B cell (primary cell): ENCODE measurements at regions of chr3 and their contacts with region 1.

Region 1: DNA sequence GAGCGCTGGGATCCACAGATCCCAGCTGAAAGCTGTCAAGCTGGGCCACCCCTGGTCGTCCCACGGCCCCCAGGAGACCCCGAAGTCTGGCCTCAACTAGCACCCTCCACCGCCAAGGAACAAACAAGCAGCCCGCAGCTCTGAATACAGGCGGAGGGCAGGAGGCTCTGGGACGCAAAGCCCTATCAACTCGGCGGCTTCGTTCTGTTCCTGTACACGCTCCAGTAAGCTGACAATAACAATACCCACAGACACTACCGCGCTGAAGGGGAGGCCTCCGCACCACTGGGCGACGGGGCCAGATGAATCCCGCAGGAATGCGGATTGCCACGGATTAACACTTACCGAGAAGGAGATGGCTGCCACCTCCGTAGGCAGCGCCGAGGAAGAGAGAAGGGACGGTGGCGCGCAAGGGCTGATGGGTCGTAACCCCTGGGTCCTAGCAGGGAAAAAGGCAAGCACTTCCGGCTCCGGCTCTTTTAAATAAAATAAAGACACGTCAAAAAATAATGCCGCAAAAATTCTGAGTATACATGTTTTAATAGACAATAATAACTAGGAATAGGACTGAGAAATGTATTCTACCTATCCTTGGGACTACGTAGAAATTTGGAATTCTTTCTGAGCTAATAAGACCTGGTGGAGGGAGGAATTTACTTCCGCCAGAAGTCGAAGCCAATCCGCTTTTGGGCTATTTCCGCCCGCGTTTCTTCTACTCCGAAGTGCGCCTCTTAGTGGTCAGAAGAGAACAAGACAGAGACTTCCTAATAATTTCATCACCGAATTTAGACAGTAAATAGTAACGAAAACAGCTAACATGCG is at the start of gene RPL32:
- DNase-seq: peak; percentile 96
- ATAC-seq: peak; percentile 92
- H3K4me3 ChIP-seq: peak within 1 kb of the TSS; percentile 83 to 99 (median 90)
- H3K4me3 Mint-ChIP-seq: peak within 1 kb of the TSS; percentile 99
- H3K27ac ChIP-seq: peak within 1 kb of the TSS; percentile 96 to 97
- H3K27ac Mint-ChIP-seq: peak within 1 kb of the TSS; percentile 99
- H3K4me1 ChIP-seq: peaks cover 14 to 30% of the 10 kb centered on the region in 2 donors
- H3K4me1 Mint-ChIP-seq: peaks cover 45% of the 10 kb centered on the region
- H3K27me3 ChIP-seq: no peaks in the 10 kb centered on the region
- H3K27me3 Mint-ChIP-seq: no peaks in the 10 kb centered on the region
- CTCF ChIP-seq: peak; percentile 86
- total RNA-seq, gene RPL32: 2,575 and 2,756 TPM in 2 replicates

Region 2: GRCh38 chr3:12556671-12557472 is 284.5 kb before region 1 on chr3 and contains the start of gene MKRN2:
- CTCF ChIA-PET with region 1: interaction called, 3 read pairs
- POLR2A ChIA-PET with region 1: no interaction called
- intact Hi-C with region 1: loop called (anchors 1 kb)
- DNase-seq: peak; percentile 91
- ATAC-seq: peak; percentile 96
- H3K4me3 ChIP-seq: peak within 1 kb of the TSS; percentile 85 to 91 (median 90)
- H3K4me3 Mint-ChIP-seq: peak within 1 kb of the TSS; percentile 91
- H3K27ac ChIP-seq: peak within 1 kb of the TSS; percentile 91 to 92
- H3K27ac Mint-ChIP-seq: peak within 1 kb of the TSS; percentile 84
- H3K4me1 ChIP-seq: peaks cover 40 to 41% of the 10 kb centered on the region in 2 donors
- H3K4me1 Mint-ChIP-seq: peaks cover 60% of the 10 kb centered on the region
- H3K27me3 ChIP-seq: peaks cover 0 to 17% (median 5%) of the 10 kb centered on the region in 4 experiments
- H3K27me3 Mint-ChIP-seq: peaks cover 23% of the 10 kb centered on the region
- CTCF ChIP-seq: no peak
- total RNA-seq, gene MKRN2: 25.9 and 29.3 TPM in 2 replicates

Region 3: DNA sequence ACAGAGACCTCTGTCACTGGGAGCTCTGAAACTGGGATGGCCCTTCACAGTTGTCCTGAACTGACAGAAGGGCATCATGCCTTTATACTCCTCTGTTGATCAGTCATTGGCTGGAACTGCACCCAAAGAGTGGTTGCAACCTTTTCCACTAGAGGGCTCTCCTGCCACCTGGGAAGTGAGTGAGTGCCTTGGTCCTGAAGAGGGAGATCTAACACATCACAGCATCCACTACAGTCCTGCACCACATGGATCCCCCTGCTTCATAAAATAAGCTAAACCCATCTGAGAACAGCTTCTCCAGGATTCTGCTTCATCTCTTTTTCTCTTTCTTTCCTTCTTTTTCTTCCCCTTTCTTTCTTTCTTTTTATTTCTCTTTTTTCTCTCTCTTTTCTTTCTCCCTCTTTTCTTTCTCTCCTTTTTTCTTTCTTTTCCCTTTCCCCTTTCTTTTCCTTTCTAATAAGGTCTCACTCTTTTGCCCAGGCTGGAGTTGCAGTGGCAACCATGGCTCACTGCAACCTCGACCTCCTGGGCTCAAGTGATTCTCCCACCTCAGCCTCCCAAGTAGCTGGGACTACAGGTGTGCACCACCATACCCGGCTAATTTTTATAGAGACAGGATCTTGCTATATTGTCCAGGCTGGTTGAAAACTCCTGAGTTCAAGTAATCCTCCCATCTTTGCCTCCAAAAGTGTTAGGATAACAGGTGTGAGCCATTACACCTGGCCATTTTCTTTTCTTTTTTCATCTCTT is 134.7 kb before region 1 on chr3:
- CTCF ChIA-PET with region 1: interaction called, 13 read pairs
- POLR2A ChIA-PET with region 1: no interaction called
- intact Hi-C with region 1: loop called (anchors 1 kb)
- DNase-seq: peak; percentile 67
- ATAC-seq: peak; percentile 97
- H3K4me3 ChIP-seq: no peak overlapping the region
- H3K4me3 Mint-ChIP-seq: no peak overlapping the region
- H3K27ac ChIP-seq: no peak overlapping the region
- H3K27ac Mint-ChIP-seq: no peak overlapping the region
- H3K4me1 ChIP-seq: no peaks in the 10 kb centered on the region
- H3K4me1 Mint-ChIP-seq: peaks cover 1% of the 10 kb centered on the region
- H3K27me3 ChIP-seq: peaks cover 0 to 7% (median 0%) of the 10 kb centered on the region in 4 experiments
- H3K27me3 Mint-ChIP-seq: peaks cover 8% of the 10 kb centered on the region
- CTCF ChIP-seq: peak; percentile 77

Region 4: DNA sequence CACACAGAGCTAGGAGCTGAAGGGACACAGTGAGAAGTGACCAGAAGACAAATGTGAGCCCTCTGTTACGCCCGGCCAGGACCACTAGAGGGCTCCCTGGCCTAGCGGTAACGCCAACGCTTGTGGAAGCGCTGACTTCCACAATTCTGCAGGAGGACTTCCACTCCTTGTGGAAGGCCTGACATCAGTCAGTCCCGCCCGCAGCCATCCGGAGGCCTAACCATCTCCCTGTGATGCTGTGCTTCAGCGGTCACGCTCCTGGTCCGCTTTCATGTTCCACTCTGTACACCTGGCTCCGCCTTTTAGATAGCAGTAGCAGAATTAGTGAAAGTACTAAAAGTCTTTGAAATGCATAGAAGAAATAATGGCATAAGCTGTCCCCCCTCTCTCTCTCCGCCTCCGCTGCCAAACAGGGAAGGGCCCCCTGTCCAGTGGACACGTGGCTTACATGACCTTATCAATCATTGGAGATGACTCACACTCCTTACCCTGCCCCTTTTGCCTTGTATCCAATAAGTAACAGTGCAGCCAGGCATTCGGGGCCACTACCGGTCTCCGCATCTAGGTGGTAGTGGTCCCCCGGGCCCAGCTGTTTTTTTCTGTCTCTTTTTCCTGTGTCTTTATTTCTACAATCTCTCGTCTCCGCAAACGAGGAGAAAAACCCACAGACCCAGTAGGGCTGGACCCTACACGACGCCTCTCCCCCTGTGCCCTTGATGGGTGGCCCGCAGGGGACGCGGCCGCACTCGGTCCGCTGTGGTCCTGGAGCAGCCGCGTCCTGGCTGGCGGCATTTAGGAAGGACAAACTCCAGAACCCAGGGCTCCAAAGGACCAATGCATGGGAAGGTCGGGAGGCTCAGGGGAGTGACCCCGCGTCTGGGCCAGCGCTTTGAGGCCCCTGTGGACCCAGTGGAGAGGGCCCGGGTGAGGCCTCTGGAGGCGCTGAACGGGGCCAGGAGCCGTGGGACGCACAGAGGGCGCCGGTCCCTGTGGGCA is 27.0 kb after region 1 on chr3:
- CTCF ChIA-PET with region 1: interaction called, 4 read pairs
- POLR2A ChIA-PET with region 1: no interaction called
- intact Hi-C with region 1: loop called (anchors 1 kb)
- DNase-seq: peak; percentile 79
- ATAC-seq: peak; percentile 73
- H3K4me3 ChIP-seq: peak overlapping the region; percentile 19 to 59 (median 47)
- H3K4me3 Mint-ChIP-seq: peak overlapping the region; percentile 85
- H3K27ac ChIP-seq: no peak overlapping the region
- H3K27ac Mint-ChIP-seq: peak overlapping the region; percentile 8
- H3K4me1 ChIP-seq: peaks cover 16 to 34% of the 10 kb centered on the region in 2 donors
- H3K4me1 Mint-ChIP-seq: peaks cover 23% of the 10 kb centered on the region
- H3K27me3 ChIP-seq: peaks cover 0 to 23% (median 3%) of the 10 kb centered on the region in 4 experiments
- H3K27me3 Mint-ChIP-seq: peaks cover 9% of the 10 kb centered on the region
- CTCF ChIP-seq: peak; percentile 92

Region 5: DNA sequence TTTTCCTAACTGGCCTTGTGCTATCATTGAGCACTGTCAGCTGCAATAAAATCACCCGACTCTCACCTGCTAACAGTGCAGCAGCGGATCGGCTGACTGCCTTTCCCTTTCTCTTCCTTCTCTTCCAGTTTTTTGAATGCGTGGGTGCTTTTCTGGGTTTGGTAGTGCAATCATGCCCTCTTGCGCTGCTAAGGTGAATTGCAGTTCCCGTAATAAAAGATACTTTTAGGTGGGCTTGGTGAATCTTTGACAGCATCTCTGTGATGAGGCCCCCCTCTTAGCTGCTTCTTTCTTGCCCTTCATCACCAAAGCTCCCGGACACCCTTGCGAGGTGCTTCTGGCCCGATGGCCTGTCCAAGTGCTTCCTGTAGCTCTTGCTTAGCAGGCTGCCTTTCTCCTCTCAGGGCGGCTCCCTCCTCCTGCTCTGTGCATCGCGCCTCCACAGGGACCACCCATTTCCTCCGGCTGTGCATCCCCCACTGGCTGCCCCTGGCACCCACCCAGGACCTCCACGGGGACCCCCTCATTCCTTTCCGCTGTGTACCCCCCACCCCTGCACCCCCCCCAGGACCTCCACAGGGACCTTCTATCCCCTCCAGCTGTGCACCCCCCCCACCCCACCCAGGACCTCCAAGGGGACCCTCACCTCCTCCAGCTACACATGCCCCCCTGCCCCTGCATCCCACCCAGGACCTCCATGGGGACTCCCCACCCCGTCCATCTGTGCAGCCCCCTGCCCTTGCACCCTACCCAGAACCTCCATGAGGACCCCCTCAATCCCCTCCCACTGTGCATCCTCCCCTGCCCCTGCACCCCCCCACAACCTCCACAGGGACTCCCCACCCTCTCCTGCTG is 50.9 kb after region 1 on chr3:
- CTCF ChIA-PET with region 1: interaction called, 18 read pairs
- POLR2A ChIA-PET with region 1: interaction called, 3 read pairs
- intact Hi-C with region 1: loop called (anchors 2 kb)
- DNase-seq: peak; percentile 75
- ATAC-seq: peak; percentile 37
- H3K4me3 ChIP-seq: peak overlapping the region in 1 of 5 experiments; percentile 35
- H3K4me3 Mint-ChIP-seq: peak overlapping the region; percentile 2
- H3K27ac ChIP-seq: no peak overlapping the region
- H3K27ac Mint-ChIP-seq: no peak overlapping the region
- H3K4me1 ChIP-seq: peaks cover 4 to 8% of the 10 kb centered on the region in 2 donors
- H3K4me1 Mint-ChIP-seq: peaks cover 14% of the 10 kb centered on the region
- H3K27me3 ChIP-seq: peaks cover 0 to 14% (median 3%) of the 10 kb centered on the region in 4 experiments
- H3K27me3 Mint-ChIP-seq: peaks cover 9% of the 10 kb centered on the region
- CTCF ChIP-seq: peak; percentile 94

Region 6: DNA sequence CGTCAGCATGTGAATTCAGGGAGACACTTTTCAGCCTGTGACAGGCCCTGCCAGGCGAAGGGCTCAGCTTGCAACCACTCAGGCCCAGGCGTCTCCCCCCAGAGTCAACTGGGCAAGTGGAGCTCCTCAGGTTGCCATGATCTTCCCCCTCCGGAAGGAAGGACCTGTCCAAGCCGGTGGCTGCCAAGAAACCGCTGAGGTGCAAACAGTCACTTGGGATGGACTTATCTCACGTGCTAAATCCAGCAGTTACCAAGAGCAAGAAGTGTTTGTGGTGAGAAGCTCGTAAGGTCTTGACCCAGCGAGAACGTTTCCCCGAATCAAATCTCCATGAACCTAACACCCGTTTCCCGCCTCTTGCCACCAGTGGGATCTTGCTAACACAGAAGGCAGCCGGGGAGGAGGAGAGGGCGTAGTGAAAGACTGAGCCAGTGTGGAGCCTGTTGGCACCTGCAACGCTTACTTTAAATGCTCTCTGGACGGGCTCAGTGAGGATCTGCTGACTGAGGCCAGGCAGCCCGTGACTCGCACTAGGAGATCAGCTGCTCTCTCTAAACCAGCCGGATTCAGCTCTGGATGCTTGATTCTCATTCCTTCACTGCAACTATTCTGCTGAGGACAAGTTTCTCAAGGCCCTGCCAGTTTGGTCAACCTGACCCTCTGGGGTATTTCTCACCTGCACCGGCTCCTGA is 192.9 kb after region 1 on chr3:
- CTCF ChIA-PET with region 1: no interaction called
- POLR2A ChIA-PET with region 1: no interaction called
- intact Hi-C with region 1: no loop called
- DNase-seq: no peak
- ATAC-seq: no peak
- H3K4me3 ChIP-seq: no peak overlapping the region
- H3K4me3 Mint-ChIP-seq: no peak overlapping the region
- H3K27ac ChIP-seq: no peak overlapping the region
- H3K27ac Mint-ChIP-seq: no peak overlapping the region
- H3K4me1 ChIP-seq: no peaks in the 10 kb centered on the region
- H3K4me1 Mint-ChIP-seq: peaks cover 2% of the 10 kb centered on the region
- H3K27me3 ChIP-seq: no peaks in the 10 kb centered on the region
- H3K27me3 Mint-ChIP-seq: no peaks in the 10 kb centered on the region
- CTCF ChIP-seq: no peak

Region 7: GRCh38 chr3:13119471-13120220 is 278.3 kb after region 1 on chr3:
- CTCF ChIA-PET with region 1: no interaction called
- POLR2A ChIA-PET with region 1: no interaction called
- intact Hi-C with region 1: no loop called
- DNase-seq: no peak
- ATAC-seq: no peak
- H3K4me3 ChIP-seq: no peak overlapping the region
- H3K4me3 Mint-ChIP-seq: no peak overlapping the region
- H3K27ac ChIP-seq: no peak overlapping the region
- H3K27ac Mint-ChIP-seq: no peak overlapping the region
- H3K4me1 ChIP-seq: peaks cover 18 to 19% of the 10 kb centered on the region in 2 donors
- H3K4me1 Mint-ChIP-seq: peaks cover 20% of the 10 kb centered on the region
- H3K27me3 ChIP-seq: peaks cover 0 to 3% (median 0%) of the 10 kb centered on the region in 4 experiments
- H3K27me3 Mint-ChIP-seq: no peaks in the 10 kb centered on the region
- CTCF ChIP-seq: no peak

Region 8: GRCh38 chr3:13414040-13414729 is 572.8 kb after region 1 on chr3:
- CTCF ChIA-PET with region 1: no interaction called
- POLR2A ChIA-PET with region 1: no interaction called
- intact Hi-C with region 1: loop called (anchors 1 kb)
- DNase-seq: peak; percentile 94
- ATAC-seq: peak; percentile 92
- H3K4me3 ChIP-seq: peak overlapping the region in 4 of 5 experiments; percentile 21 to 33 (median 29)
- H3K4me3 Mint-ChIP-seq: peak overlapping the region; percentile 73
- H3K27ac ChIP-seq: peak overlapping the region; percentile 90 to 91
- H3K27ac Mint-ChIP-seq: peak overlapping the region; percentile 98
- H3K4me1 ChIP-seq: peaks cover 60 to 72% of the 10 kb centered on the region in 2 donors
- H3K4me1 Mint-ChIP-seq: peaks cover 61% of the 10 kb centered on the region
- H3K27me3 ChIP-seq: no peaks in the 10 kb centered on the region
- H3K27me3 Mint-ChIP-seq: no peaks in the 10 kb centered on the region
- CTCF ChIP-seq: peak; percentile 26

Region 9: GRCh38 chr3:13479581-13480339 is 638.4 kb after region 1 on chr3 and contains the start of gene HDAC11:
- CTCF ChIA-PET with region 1: interaction called, 3 read pairs
- POLR2A ChIA-PET with region 1: no interaction called
- intact Hi-C with region 1: loop called (anchors 1 kb)
- DNase-seq: peak; percentile 97
- ATAC-seq: peak; percentile 97
- H3K4me3 ChIP-seq: peak within 1 kb of the TSS; percentile 65 to 90 (median 80)
- H3K4me3 Mint-ChIP-seq: peak within 1 kb of the TSS; percentile 92
- H3K27ac ChIP-seq: peak within 1 kb of the TSS; percentile 61 to 86
- H3K27ac Mint-ChIP-seq: peak within 1 kb of the TSS; percentile 84
- H3K4me1 ChIP-seq: peaks cover 0 to 16% of the 10 kb centered on the region in 2 donors
- H3K4me1 Mint-ChIP-seq: peaks cover 7% of the 10 kb centered on the region
- H3K27me3 ChIP-seq: no peaks in the 10 kb centered on the region
- H3K27me3 Mint-ChIP-seq: peaks cover 3% of the 10 kb centered on the region
- CTCF ChIP-seq: no peak
- total RNA-seq, gene HDAC11: 5.5 and 6.1 TPM in 2 replicates

Region 10: DNA sequence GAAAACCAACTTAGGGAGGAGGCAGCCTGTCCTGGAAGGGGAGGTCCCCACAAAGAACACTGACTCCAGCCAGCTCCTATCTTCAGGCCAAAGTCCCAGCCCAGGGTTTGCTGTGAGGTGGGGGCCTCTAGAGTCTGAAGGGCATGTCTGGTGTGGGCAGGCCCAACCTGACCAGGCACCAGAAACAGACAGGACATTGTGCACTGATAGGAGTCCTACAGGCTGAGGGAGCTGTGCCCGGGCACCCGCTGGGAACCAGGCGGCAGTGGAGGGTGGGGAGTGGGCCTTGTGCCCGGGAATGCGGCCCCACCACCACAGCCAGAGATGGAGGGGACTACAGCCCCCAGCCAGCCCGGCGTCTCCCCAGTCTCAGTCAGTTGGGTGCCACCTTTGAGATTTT is 877.1 kb after region 1 on chr3:
- CTCF ChIA-PET with region 1: no interaction called
- POLR2A ChIA-PET with region 1: no interaction called
- intact Hi-C with region 1: no loop called
- DNase-seq: no peak
- ATAC-seq: no peak
- H3K4me3 ChIP-seq: no peak overlapping the region
- H3K4me3 Mint-ChIP-seq: no peak overlapping the region
- H3K27ac ChIP-seq: no peak overlapping the region
- H3K27ac Mint-ChIP-seq: no peak overlapping the region
- H3K4me1 ChIP-seq: no peaks in the 10 kb centered on the region
- H3K4me1 Mint-ChIP-seq: no peaks in the 10 kb centered on the region
- H3K27me3 ChIP-seq: no peaks in the 10 kb centered on the region
- H3K27me3 Mint-ChIP-seq: no peaks in the 10 kb centered on the region
- CTCF ChIP-seq: no peak